K562 (cell line): ENCODE measurements at regions of chr4 and their contacts with region 1.

Region 1: DNA sequence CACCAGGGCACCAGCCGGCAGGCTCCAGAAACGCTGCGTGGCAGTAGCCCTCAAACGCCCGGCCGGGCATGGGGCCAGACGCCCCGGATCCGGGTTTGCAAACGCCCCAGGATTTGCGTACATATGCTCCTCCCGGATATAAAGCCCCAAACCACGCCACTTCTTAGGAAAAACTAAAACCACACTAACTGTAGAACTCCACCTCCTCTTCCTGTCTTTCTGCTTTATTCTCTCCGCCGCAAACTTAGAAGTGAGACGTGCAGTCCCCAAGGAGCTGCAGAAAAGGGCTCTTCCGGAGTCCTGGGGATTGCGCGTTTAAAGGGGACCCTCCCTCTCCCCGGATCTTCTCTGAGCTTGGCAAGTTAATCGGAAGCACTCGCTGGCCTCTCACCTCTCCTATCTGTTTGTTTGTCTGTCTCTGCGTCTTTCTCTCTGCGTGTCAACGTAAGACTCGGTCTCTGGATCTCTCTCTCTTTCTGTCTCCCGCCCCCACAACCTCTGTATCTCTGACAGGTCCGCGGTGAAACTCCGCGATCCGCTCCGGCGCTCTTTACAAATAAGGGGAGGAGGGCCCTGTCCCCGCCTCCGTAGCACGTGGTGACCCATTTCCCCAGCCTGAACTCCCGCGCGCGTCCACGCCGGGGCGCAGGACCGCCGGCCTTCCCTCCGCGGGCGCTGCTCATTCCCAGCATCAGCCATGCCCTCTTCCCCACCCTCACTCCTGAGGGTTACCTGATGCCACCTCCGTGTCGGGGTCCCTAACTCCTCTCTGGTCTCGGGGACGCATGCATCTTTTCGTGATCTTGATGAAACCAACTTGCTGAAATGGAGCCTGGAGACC is at the start of gene SLC39A8:
- DNase-seq: peak; percentile 89 to 94 (median 90)
- ATAC-seq: peak; percentile 91
- H3K4me3 ChIP-seq: peak within 1 kb of the TSS; percentile 51
- H3K27ac ChIP-seq: peak within 1 kb of the TSS; percentile 85
- H3K4me1 ChIP-seq: peaks cover 22 to 25% of the 10 kb centered on the region in 2 experiments
- H3K27me3 ChIP-seq: no peaks in the 10 kb centered on the region
- CTCF ChIP-seq: peak; percentile 79 to 86 (median 85)
- EP300 ChIP-seq: peak; percentile 48
- POLR2A ChIP-seq: peak; percentile 81
- RAD21 ChIP-seq: peak; percentile 47 to 68
- polyA plus RNA-seq, gene SLC39A8: 8.2 to 10.1 TPM

Region 2: GRCh38 chr4:102255454-102255853 is 89.7 kb before region 1 on chr4:
- CTCF ChIA-PET with region 1: no interaction called
- POLR2A ChIA-PET with region 1: no interaction called
- in situ Hi-C with region 1: no loop called
- intact Hi-C with region 1: loop called (anchors 2 kb)
- DNase-seq: no peak
- ATAC-seq: no peak
- H3K4me3 ChIP-seq: no peak overlapping the region
- H3K27ac ChIP-seq: no peak overlapping the region
- H3K4me1 ChIP-seq: no peaks in the 10 kb centered on the region; a peak in 1 of 5 replicates
- H3K27me3 ChIP-seq: no peaks in the 10 kb centered on the region
- CTCF ChIP-seq: no peak
- EP300 ChIP-seq: no peak
- POLR2A ChIP-seq: no peak
- RAD21 ChIP-seq: no peak

Region 3: GRCh38 chr4:102387552-102388150 is 42.5 kb after region 1 on chr4:
- CTCF ChIA-PET with region 1: no interaction called
- POLR2A ChIA-PET with region 1: no interaction called
- in situ Hi-C with region 1: loop called (anchors 5 kb)
- intact Hi-C with region 1: no loop called
- DNase-seq: peak in 1 of 4 experiments; percentile 2
- ATAC-seq: no peak
- H3K4me3 ChIP-seq: no peak overlapping the region
- H3K27ac ChIP-seq: no peak overlapping the region
- H3K4me1 ChIP-seq: no peaks in the 10 kb centered on the region
- H3K27me3 ChIP-seq: peaks cover 0 to 3% of the 10 kb centered on the region in 2 experiments; a peak in 1 of 5 replicates
- CTCF ChIP-seq: no peak
- EP300 ChIP-seq: no peak
- POLR2A ChIP-seq: no peak
- RAD21 ChIP-seq: no peak

Region 4: GRCh38 chr4:102430461-102430910 is 85.3 kb after region 1 on chr4:
- CTCF ChIA-PET with region 1: interaction called, 16 read pairs
- POLR2A ChIA-PET with region 1: no interaction called
- in situ Hi-C with region 1: no loop called
- intact Hi-C with region 1: loop called (anchors 1 kb)
- DNase-seq: peak in 2 of 4 experiments; percentile 10 to 25
- ATAC-seq: peak; percentile 56
- H3K4me3 ChIP-seq: peak overlapping the region; percentile 49
- H3K27ac ChIP-seq: peak overlapping the region; percentile 71; the same call in 2 of the 3 replicates
- H3K4me1 ChIP-seq: no peaks in the 10 kb centered on the region; a peak in 1 of 5 replicates
- H3K27me3 ChIP-seq: no peaks in the 10 kb centered on the region
- CTCF ChIP-seq: no peak
- EP300 ChIP-seq: no peak
- POLR2A ChIP-seq: no peak
- RAD21 ChIP-seq: no peak

Region 5: GRCh38 chr4:102918859-102919258 is 573.7 kb after region 1 on chr4:
- CTCF ChIA-PET with region 1: no interaction called
- POLR2A ChIA-PET with region 1: no interaction called
- in situ Hi-C with region 1: no loop called
- intact Hi-C with region 1: no loop called
- DNase-seq: no peak
- ATAC-seq: no peak
- H3K4me3 ChIP-seq: no peak overlapping the region
- H3K27ac ChIP-seq: no peak overlapping the region
- H3K4me1 ChIP-seq: no peaks in the 10 kb centered on the region
- H3K27me3 ChIP-seq: no peaks in the 10 kb centered on the region
- CTCF ChIP-seq: no peak
- EP300 ChIP-seq: no peak
- POLR2A ChIP-seq: no peak
- RAD21 ChIP-seq: no peak

Region 6: DNA sequence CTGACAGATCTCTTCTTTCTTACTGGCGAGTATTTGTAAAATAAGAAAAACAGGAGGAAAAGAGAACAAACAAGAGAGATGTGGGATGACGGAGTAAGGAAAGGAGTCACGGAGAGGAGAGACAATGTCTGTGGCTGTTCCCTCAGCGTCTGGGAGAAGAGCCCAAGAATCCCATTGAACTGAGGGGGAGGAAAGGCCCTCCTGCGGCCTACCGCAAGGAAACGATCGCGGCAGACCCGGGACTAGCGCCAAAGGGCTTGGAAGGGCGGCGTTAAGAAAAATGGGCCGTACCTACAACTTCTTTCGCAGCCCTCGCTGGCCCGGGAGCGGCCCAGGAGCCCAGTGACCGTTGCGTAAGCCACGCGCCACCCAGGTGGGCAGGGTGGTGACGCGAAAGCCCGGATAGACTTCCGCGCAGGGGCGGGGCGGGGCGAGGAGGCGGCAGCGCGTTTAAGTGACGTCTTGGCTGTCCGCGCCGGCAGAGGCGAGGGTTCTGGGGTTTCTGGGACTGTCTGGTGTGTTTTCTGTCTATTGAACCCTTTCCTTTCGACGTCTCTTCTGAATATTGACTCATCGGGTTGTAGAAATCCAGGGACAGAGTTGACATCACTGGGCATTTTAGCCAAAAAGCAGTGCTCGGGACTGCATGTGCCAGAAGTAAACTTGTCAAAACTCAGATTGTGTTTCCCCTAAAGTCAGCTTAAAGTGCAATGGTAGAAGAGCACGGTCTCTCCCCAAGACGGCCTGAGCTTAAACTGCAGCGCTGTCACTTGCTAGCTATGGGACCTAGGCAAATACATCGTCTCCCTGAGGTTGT is 674.3 kb after region 1 on chr4 and contains the start of gene SLC9B1:
- CTCF ChIA-PET with region 1: no interaction called
- POLR2A ChIA-PET with region 1: no interaction called
- in situ Hi-C with region 1: no loop called
- intact Hi-C with region 1: loop called (anchors 10 kb)
- DNase-seq: peak; percentile 89 to 97 (median 91)
- ATAC-seq: peak; percentile 99
- H3K4me3 ChIP-seq: peak within 1 kb of the TSS; percentile 44
- H3K27ac ChIP-seq: peak within 1 kb of the TSS; percentile 92
- H3K4me1 ChIP-seq: peaks cover 7 to 9% of the 10 kb centered on the region in 2 experiments; a peak in 4 of 5 replicates
- H3K27me3 ChIP-seq: no peaks in the 10 kb centered on the region
- CTCF ChIP-seq: no peak
- EP300 ChIP-seq: peak; percentile 59; the same call in 1 of the 2 replicates
- POLR2A ChIP-seq: peak; percentile 89
- RAD21 ChIP-seq: 0 out of 4 replicates have a peak, but pooled peaks of 1 of the 2 experiments have one; percentile 11
- polyA plus RNA-seq, gene SLC9B1: 0.21 to 0.92 TPM